ENCODE measurements at regions of chr4 and their contacts with region 1.

Region 1: DNA sequence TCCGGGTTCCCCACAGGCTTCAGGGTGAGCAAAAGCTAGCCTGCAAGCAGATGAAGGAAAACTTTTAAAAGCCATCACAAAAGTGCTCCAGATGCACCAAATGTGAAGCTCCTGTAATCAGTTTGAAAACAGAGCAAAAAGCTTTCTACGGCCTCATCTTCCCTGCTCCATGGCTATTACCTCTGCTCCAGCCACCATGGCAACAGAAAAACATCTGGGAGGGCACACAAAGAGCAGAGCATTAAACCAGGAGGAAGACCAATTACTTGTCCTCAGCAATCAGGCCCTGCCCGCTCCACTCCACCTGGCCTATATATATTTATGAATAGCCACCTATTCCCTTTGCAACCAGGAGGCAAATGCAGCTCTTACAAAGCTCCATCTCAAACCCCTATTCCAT is 33.6 kb downstream of the TMEM154 start:
- DNase-seq: no peak
- ATAC-seq: no peak
- H3K4me3 ChIP-seq: no peak overlapping the region
- H3K27ac ChIP-seq: no peak overlapping the region
- H3K4me1 ChIP-seq: peaks cover 0 to 31% (median 5%) of the 10 kb centered on the region in 9 donors
- H3K27me3 ChIP-seq: no peaks in the 10 kb centered on the region
- CTCF ChIP-seq: no peak

Region 2: DNA sequence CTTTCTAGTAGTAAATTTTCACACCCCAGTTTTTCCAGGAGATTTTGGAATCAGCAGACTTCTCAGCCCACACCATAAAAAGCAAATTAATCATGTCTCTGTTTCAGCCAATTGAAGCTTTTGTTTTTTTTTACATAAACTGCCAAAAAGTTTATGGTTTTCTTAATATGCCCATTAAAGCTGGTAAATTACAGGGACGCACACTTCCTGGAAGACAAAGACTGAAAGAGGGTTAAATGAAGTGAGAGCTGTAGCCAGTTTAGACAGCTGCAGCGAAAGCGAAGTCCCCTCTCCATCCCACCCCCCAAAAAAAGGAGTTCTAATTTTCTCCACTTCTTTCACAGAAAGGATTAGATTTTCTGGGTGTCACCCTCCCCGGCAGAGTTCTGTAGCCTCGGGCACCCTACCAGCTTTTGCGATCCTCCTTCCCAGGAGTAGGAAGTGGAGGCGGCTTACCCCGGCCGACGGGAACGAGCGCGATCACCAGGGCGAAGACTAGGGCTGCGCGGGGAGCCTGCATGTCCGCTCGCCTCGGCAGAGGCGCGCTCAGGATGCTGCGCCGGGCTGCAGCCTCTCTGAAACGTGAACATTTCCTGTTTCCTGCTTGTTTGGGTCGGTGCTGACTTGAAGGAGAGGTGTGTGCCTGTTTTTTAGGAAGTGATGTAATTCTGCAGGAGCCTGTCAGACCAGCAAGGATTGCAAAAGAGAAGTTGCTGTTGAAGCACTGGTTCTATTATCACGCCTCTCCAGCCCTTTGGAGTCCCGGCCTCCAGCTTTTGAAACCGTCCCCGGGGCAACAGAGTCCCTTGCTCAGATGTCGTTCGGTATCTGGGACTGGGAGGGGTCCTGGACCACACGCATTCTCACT is 33.4 kb after region 1 on chr4 and contains the start of gene TMEM154:
- intact Hi-C with region 1: loop called in 1 of 10 experiments (anchors 5 kb)
- DNase-seq: peak; percentile 51
- ATAC-seq: peak; percentile 70 to 92 (median 82)
- H3K4me3 ChIP-seq: peak within 1 kb of the TSS; percentile 21 to 62 (median 51)
- H3K27ac ChIP-seq: peak within 1 kb of the TSS in 7 of 10 donors; percentile 3 to 86 (median 54)
- H3K4me1 ChIP-seq: peaks cover 0 to 35% (median 8%) of the 10 kb centered on the region in 9 donors
- H3K27me3 ChIP-seq: no peaks in the 10 kb centered on the region
- CTCF ChIP-seq: no peak
- total RNA-seq, gene TMEM154: 1.1 to 5.4 (median 2.2) TPM

Region 3: DNA sequence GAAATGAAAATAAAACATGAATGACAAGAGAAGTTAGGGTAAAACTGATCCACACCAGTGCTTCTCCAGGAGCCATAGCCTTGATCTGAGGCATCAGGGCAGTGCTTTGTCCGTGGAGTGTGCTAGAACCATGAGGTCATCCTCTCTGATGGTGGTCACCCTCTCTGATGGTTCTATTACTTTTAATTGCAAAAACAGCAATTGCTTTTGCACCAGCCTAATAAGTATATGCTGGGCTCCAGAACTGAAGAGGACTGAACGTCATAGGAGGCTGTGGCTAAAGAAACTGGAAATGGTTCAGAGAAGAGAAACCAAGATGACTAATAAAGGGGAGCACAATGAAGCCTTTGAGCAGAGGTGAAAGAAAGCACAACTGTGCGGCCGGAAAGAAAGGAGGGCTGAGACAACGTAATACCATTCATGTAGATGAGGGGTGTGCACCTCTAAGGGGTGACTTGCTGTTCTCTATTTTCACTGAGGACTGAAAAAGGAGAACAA is 50.6 kb after region 1 on chr4:
- intact Hi-C with region 1: no loop called
- DNase-seq: no peak
- ATAC-seq: peak in 5 of 8 donors; percentile 24 to 65 (median 61)
- H3K4me3 ChIP-seq: no peak overlapping the region
- H3K27ac ChIP-seq: no peak overlapping the region
- H3K4me1 ChIP-seq: peaks cover 0 to 16% (median under 1%) of the 10 kb centered on the region in 9 donors
- H3K27me3 ChIP-seq: peaks cover 0 to under 1% (median 0%) of the 10 kb centered on the region in 7 donors
- CTCF ChIP-seq: no peak

Region 4: GRCh38 chr4:153326513-153326912 is 680.3 kb after region 1 on chr4:
- intact Hi-C with region 1: no loop called
- DNase-seq: no peak
- ATAC-seq: no peak
- H3K4me3 ChIP-seq: no peak overlapping the region
- H3K27ac ChIP-seq: no peak overlapping the region
- H3K4me1 ChIP-seq: no peaks in the 10 kb centered on the region
- H3K27me3 ChIP-seq: no peaks in the 10 kb centered on the region
- CTCF ChIP-seq: no peak

Measured in heart right ventricle (tissue), 16 donors.